A673 (cell line): ENCODE measurements at regions of chr11 and their contacts with region 1.

Region 1: DNA sequence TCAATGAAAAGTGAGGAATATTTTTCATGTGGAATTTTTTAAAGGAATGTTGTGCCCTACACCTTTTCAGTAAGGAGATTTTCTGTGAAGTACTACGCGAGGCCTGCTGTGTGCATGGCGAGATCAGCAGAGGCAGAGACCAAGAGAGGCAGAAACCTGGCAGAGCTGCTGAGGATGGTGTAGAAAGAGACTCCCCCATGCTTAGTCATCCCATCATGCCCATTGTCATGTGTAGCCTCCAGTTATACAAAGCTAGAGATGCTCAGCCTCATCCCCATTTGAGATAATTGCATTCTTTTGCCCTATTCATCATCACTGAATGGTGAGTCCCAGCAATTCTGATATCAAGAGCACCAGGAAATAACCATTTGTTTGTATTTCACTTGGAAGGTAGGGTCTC is 3.0 kb upstream of the MS4A7 start:
- DNase-seq: no peak
- H3K4me3 ChIP-seq: no peak overlapping the region
- H3K27ac ChIP-seq: no peak overlapping the region
- H3K4me1 ChIP-seq: no peaks in the 10 kb centered on the region
- H3K27me3 ChIP-seq: peaks cover 24% of the 10 kb centered on the region
- CTCF ChIP-seq: no peak

Region 2: DNA sequence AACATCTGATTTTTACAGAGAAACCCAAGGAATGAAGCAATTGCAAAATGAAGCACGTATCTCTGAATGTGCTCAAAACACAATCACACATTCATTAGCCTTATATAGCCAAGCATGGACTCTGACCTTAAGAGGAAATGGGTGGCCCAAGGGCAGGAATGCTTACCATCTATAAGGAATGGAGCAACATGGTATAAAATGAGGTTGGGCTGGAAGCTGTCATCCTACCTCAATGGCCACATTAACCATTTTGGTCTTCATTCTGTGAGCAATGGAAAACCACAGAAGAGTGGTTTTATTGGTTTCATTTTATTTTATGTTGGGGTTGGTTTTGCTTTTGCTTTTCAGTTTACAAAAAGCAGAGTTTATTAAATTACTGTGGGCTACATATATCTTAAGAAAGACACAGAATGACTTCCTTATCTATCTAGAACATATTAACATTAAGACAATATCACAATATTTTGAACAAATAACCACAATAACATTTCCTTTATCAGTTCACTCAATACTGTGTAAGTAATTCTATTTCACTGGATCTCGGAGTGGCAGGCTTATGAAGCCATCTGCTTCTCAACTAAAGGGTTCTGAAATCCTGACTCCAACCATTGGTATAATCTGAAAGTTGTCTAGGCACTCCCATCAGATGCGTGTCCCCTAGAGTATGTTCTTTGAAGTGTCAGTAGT is 129.1 kb after region 1 on chr11:
- CTCF ChIA-PET with region 1: no interaction called
- POLR2A ChIA-PET with region 1: interaction called, 26 read pairs
- intact Hi-C with region 1: no loop called
- DNase-seq: no peak
- H3K4me3 ChIP-seq: no peak overlapping the region
- H3K27ac ChIP-seq: no peak overlapping the region
- H3K4me1 ChIP-seq: no peaks in the 10 kb centered on the region
- H3K27me3 ChIP-seq: peaks cover 21% of the 10 kb centered on the region
- CTCF ChIP-seq: no peak